ENCODE measurements at regions of chr5 and their contacts with region 1.

Region 1: GRCh38 chr5:10283927-10284635 is 23.6 kb downstream of the CMBL start:
- DNase-seq: peak; percentile 77
- H3K4me3 ChIP-seq: no peak overlapping the region
- H3K27ac ChIP-seq: no peak overlapping the region
- H3K4me1 ChIP-seq: no peaks in the 10 kb centered on the region
- H3K27me3 ChIP-seq: no peaks in the 10 kb centered on the region
- CTCF ChIP-seq: peak; percentile 64 to 89 (median 83)
- POLR2A ChIP-seq: no peak

Region 2: GRCh38 chr5:10307206-10308148 is 23.4 kb after region 1 on chr5 and contains the start of gene CMBL:
- intact Hi-C with region 1: loop called (anchors 2 kb)
- DNase-seq: peak; percentile 64
- H3K4me3 ChIP-seq: peak within 1 kb of the TSS; percentile 43 to 49
- H3K27ac ChIP-seq: peak within 1 kb of the TSS; percentile 83 to 86
- H3K4me1 ChIP-seq: no peaks in the 10 kb centered on the region
- H3K27me3 ChIP-seq: no peaks in the 10 kb centered on the region
- CTCF ChIP-seq: no peak
- POLR2A ChIP-seq: peak; percentile 53
- total RNA-seq, gene CMBL: 11.2 to 20.3 TPM

Region 3: DNA sequence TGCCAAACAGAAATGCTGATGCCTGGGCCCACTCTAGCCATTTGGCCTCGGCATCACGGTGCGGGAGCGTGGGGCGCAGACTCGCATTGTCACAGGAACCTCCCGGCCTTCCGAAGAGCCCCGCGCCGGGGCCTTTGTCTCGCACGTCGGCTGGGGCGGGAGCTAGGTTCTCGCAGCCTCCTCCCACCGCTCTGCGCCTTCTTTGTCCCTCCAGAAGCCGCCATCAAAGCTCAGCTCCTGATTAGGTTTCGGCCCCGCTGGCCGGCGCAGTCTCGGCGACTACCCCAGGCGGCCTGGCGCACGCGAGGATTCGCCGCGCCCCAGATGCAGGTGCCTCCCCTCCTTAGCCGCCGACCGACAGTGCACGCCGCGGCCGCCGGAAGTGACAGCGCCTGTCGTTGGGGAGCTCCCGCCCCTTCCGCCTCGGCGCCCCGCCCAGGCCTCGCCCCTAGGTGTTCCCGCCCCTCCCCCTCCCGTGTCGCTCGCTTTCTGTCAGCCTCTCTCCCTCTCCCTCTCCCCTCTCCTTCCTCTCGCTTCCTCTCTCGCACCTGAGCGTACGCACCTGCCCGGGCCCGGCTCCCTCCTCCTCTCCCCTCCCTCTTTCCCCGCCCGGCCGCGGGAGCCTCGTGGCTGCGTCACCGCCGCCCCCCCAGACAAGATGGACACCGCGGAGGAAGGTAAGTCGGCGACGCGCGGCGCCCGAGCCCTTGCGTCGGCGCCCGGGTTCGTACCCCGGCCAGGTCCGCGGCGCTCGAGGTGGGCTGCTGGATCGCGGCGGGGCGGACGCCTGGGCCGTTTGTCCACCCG is 69.4 kb after region 1 on chr5 and contains the start of gene MARCHF6:
- intact Hi-C with region 1: loop called (anchors 5 kb)
- DNase-seq: peak; percentile 96
- H3K4me3 ChIP-seq: peak within 1 kb of the TSS; percentile 94 to 98
- H3K27ac ChIP-seq: peak within 1 kb of the TSS; percentile 98 to 99
- H3K4me1 ChIP-seq: no peaks in the 10 kb centered on the region
- H3K27me3 ChIP-seq: no peaks in the 10 kb centered on the region
- CTCF ChIP-seq: peak in 2 of 4 experiments; percentile 23 to 44
- POLR2A ChIP-seq: peak; percentile 93
- total RNA-seq, gene MARCHF6: 65.3 to 86.5 TPM

Region 4: DNA sequence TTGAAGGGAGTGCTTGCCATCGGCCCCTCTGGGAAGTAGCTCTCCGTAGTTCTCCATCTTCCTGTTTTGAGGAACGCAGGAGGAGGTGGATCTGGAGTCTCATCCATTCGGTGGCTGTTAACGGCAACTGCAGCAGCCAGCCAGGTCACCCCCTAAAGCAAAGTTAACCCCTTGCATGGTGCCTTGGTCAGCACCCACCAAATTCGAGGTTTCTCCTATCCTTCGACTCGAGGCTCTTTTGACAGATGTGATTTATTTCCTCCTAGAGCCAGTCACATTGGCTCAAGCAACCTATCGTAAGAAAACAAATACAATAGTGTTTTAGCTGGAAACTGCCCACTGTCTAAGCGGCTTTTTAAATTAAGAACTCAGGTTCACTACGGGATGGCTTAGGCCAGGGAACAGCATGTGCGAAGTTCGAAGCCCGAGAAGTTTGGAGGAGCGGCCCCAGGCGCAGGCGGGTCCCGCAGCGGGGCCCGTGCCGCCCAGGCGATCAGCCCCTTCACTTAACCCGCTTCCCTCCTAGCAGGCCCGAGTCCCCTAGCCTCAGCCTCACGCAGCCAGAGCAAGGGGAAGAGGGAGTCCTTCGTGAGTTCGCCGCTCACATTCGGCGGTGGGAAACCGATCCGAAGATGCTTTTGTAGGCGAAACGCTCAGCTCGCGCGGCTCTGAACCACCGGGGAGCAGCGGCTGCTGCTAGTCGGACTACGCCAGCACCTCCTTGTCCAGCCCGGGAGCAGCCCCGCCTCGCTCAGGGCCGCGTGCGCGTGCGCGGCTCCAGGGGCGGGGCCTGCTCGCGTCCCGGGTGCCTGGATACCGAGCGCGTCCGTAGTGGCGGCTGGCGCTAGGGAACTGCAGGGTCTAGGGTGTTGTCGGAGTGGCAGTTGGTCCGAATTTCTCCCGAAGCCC is 157.3 kb after region 1 on chr5 and contains the start of gene ROPN1L:
- intact Hi-C with region 1: loop called (anchors 5 kb)
- DNase-seq: peak; percentile 84
- H3K4me3 ChIP-seq: peak within 1 kb of the TSS; percentile 47 to 54
- H3K27ac ChIP-seq: peak within 1 kb of the TSS; percentile 61 to 78
- H3K4me1 ChIP-seq: no peaks in the 10 kb centered on the region
- H3K27me3 ChIP-seq: no peaks in the 10 kb centered on the region
- CTCF ChIP-seq: peak in 1 of 4 experiments; percentile 29
- POLR2A ChIP-seq: peak; percentile 83
- total RNA-seq, gene ROPN1L: 34.9 TPM in 1 of 2 donors, not detected in the other